KBM-7 (cell line): ENCODE measurements at regions of chr17 and their contacts with region 1.

Region 1: DNA sequence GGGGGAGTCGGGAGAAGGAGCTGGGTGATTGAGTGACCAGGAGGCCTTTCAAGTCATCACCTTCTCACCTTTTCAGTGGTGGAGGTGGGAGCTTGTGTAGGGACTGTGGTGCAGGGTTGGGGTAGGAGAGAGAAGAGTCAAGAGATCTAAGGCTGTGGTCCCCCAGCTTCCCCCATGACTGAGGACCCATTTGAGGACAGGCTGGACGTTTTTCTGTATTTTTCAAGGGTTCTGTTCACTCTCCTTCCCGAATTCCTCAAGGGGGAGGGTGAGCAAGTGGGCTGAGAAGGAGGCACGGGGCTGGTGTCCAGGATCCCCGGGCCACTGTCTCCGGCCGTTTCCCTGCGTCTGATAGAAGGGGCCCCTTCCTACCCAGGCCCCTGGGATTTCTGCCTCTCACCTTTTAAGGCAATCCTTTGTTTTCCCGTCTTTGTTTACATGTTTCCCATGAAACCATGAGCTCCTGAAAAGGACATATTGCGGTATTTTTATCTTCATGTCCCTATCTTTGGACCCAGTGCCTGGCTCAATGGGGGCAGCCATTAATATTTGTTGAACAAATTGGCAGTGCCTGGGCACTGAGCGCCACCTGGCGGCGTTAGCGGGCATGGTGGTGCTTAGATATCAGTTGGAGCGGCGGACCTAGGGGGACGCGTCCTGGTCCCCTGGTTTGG is 9.2 kb upstream of the CD300A start:
- DNase-seq: peak; percentile 74

Region 2: DNA sequence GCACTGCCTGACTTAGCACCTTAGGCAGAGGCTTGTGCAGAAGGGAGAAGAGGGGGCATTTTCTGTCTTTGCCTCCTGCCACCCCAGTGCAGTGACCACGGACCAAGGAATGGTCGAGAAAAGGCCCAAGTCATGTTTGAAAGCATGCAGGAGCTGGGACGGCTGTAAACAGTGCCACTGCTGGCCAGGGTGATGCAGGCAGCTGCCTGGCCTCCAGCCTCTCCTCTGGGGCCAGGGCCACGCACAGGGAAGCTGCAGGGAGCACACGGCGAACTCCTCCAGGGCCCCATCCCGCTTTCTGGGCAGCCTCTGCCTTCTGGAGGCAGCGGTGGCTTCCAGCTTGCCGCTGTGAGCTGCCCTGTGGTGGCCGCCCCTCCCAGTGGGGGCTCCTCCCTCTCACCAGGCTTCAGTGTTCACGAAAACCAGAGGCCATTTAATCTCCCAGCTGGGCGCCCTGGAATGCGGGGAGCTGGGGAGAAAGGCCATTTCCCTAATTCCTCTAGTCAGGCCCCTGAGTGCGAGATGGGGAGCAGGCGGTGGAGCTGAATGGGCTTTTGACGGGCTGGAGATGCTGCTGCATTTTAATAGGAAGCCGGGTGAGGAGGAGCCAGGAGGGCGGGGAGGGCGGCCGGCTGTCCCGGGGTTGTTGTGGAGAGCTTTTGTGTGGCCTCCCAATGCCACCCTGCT is 212.0 kb before region 1 on chr17:
- in situ Hi-C with region 1: no loop called
- DNase-seq: no peak

Region 3: DNA sequence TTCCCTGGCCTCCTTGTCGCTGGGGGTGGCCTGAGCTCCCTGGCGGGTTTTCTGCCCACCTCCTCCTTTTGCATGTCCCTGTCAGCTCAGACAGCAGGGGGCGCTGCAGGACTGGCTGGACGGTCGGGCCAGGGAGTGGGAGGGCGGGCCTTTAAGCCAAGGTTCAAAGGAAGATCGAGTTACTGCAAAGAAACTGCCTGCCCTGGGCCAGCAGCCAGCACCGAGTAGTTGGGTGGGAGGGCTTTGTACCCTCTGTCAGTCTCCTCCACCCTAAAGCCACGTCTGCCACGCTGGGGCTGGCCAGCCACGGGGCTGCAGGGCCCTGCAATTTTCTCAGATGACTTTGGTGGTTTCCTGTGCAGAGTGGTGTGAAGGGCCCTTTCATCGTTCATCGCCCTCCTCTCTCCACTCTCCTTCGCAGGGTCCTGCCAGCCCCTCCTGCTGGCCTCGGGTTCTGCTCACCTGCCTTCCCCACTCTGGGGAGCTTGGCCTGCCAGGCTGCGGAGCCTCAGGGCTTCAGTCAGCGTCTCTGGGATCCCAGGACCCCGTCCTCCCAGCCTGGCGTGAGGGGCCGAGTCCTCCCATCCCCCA is 77.7 kb before region 1 on chr17:
- in situ Hi-C with region 1: loop called (anchors 10 kb)
- DNase-seq: peak; percentile 91

Region 4: DNA sequence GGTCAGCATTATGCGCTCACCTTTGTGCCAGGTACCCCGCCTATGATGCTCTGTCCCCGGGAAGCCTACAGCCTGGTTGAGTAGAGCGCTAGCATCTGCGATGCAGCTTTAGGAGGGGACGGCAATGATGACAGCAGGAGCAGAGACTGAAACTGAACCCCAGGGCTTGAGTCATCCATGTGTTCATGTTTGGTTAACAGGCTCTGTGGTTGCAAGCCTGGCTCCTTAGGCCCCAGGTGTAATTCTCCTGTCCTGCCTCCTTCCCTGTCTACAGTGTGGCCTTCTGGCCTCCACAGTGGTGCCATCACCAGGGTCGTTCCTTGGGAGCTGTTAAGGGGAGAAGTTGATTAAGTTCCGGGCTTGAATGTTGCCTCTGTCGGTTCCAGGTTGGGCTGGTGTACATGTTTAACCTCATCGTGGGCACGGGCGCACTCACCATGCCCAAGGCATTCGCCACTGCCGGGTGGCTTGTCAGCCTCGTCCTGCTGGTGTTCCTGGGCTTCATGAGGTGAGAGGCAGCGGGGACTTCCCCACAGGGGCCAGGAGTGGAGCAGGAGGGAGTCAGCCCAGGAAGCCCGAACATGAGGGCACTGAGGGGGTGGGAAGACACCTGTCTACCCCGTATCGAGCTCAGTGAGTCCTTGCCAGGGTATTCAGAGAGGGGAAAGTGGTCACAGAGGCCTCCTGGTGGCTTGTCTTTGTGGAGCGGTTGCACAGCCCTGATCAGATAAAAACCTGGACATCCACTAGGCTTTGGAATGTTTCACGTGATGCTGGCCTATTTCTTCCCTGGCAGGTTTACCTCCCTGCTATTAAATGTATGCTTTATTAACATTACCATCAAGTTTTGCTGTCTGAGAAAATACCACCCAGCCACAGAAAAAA is 328.1 kb after region 1 on chr17:
- in situ Hi-C with region 1: no loop called
- DNase-seq: no peak